ENCODE measurements at regions of chr9 and their contacts with region 1.

Region 1: GRCh38 chr9:71768388-71769174 is at the start of gene CEMIP2:
- DNase-seq: no peak
- ATAC-seq: peak; percentile 93
- H3K4me3 ChIP-seq: peak within 1 kb of the TSS; percentile 84
- H3K27ac ChIP-seq: peak within 1 kb of the TSS; percentile 37; the same call in 1 of the 2 replicates
- H3K4me1 ChIP-seq: peaks cover 14% of the 10 kb centered on the region
- H3K27me3 ChIP-seq: peaks cover 0 to 18% of the 10 kb centered on the region in 2 experiments; a peak in 2 of 4 replicates
- CTCF ChIP-seq: peak; percentile 44 to 81 (median 59); a peak in 5 of 6 replicates
- EP300 ChIP-seq: no peak
- POLR2A ChIP-seq: peak; percentile 74
- RAD21 ChIP-seq: peak; percentile 76
- polyA plus RNA-seq, gene CEMIP2: 0.50 to 0.79 TPM

Region 2: GRCh38 chr9:71285191-71285656 is 483.4 kb before region 1 on chr9:
- CTCF ChIA-PET with region 1: interaction called, 26 read pairs
- POLR2A ChIA-PET with region 1: interaction called, 3 read pairs
- RAD21 ChIA-PET with region 1: interaction called, 3 read pairs
- SMC1A ChIA-PET with region 1: interaction called, 4 read pairs
- in situ Hi-C with region 1: loop called (anchors 10 kb)
- intact Hi-C with region 1: loop called (anchors 2 kb)
- DNase-seq: no peak
- ATAC-seq: peak; percentile 94
- H3K4me3 ChIP-seq: no peak overlapping the region
- H3K27ac ChIP-seq: no peak overlapping the region
- H3K4me1 ChIP-seq: no peaks in the 10 kb centered on the region
- H3K27me3 ChIP-seq: no peaks in the 10 kb centered on the region
- CTCF ChIP-seq: peak; percentile 84 to 93 (median 90)
- EP300 ChIP-seq: no peak
- POLR2A ChIP-seq: no peak
- RAD21 ChIP-seq: peak; percentile 97

Region 3: DNA sequence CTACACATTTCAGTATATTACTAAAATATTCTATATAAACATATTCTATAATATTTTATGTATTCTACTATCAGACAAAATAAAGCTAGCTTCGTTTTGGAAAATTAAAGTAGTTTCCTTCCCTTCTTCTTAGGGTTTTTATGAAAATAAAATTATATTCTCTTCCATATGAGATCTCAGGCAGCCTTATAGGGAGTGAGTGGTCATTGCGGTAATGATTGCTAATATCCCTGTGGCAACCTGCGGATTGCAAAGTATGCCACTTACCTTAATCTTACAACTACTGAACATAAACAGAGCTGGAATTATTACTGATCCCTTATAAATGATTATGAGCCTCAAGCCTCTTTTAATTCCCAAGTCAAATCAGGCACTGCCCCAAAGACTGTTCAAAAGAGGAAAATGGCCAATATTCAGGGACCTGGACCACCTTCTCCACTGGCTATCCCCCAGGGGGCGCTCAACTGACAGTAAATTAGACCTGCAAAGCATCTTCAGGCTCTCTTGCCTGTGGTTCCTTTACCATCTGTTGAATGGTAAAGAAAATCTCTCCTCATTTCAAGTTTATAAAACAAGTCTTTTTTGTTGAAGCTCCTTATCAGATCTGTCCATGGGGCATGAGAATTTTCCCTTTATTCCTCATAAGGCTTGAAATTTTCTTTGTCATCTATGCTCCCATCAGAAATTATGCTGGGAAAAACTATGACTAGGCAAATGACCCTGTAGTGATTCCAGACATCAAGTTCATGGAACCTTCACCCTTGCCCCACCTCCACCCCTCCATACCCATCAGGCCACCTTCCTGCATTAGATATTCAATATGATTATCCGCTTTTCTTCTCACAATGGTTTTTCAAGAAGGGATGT is 164.2 kb before region 1 on chr9:
- CTCF ChIA-PET with region 1: interaction called, 31 read pairs
- POLR2A ChIA-PET with region 1: no interaction called
- RAD21 ChIA-PET with region 1: interaction called, 3 read pairs
- SMC1A ChIA-PET with region 1: interaction called, 13 read pairs
- in situ Hi-C with region 1: loop called (anchors 5 kb)
- intact Hi-C with region 1: loop called (anchors 1 kb)
- DNase-seq: no peak
- ATAC-seq: peak; percentile 93
- H3K4me3 ChIP-seq: no peak overlapping the region
- H3K27ac ChIP-seq: no peak overlapping the region
- H3K4me1 ChIP-seq: no peaks in the 10 kb centered on the region
- H3K27me3 ChIP-seq: no peaks in the 10 kb centered on the region
- CTCF ChIP-seq: peak; percentile 60 to 74 (median 62)
- EP300 ChIP-seq: no peak
- POLR2A ChIP-seq: no peak
- RAD21 ChIP-seq: peak; percentile 75

Region 4: GRCh38 chr9:71683598-71684235 is 84.9 kb before region 1 on chr9:
- CTCF ChIA-PET with region 1: interaction called, 5 read pairs
- POLR2A ChIA-PET with region 1: interaction called, 6 read pairs
- RAD21 ChIA-PET with region 1: interaction called, 7 read pairs
- SMC1A ChIA-PET with region 1: interaction called, 3 read pairs
- in situ Hi-C with region 1: no loop called
- intact Hi-C with region 1: loop called (anchors 5 kb)
- DNase-seq: no peak
- ATAC-seq: no peak
- H3K4me3 ChIP-seq: no peak overlapping the region
- H3K27ac ChIP-seq: no peak overlapping the region
- H3K4me1 ChIP-seq: no peaks in the 10 kb centered on the region
- H3K27me3 ChIP-seq: no peaks in the 10 kb centered on the region
- CTCF ChIP-seq: no peak
- EP300 ChIP-seq: no peak
- POLR2A ChIP-seq: no peak
- RAD21 ChIP-seq: no peak

Region 5: GRCh38 chr9:71783120-71783530 is 14.5 kb after region 1 on chr9:
- CTCF ChIA-PET with region 1: interaction called, 16 read pairs
- POLR2A ChIA-PET with region 1: no interaction called
- RAD21 ChIA-PET with region 1: interaction called, 8 read pairs
- SMC1A ChIA-PET with region 1: interaction called, 6 read pairs
- in situ Hi-C with region 1: no loop called
- intact Hi-C with region 1: no loop called
- DNase-seq: no peak
- ATAC-seq: peak; percentile 89
- H3K4me3 ChIP-seq: no peak overlapping the region; the same call in 1 of the 2 replicates
- H3K27ac ChIP-seq: no peak overlapping the region
- H3K4me1 ChIP-seq: peaks cover 23% of the 10 kb centered on the region
- H3K27me3 ChIP-seq: no peaks in the 10 kb centered on the region
- CTCF ChIP-seq: peak in 2 of 3 experiments; percentile 35 to 37; a peak in 3 of 6 replicates
- EP300 ChIP-seq: peak; percentile 79 to 95; a peak in 3 of 4 replicates
- POLR2A ChIP-seq: 0 out of 2 replicates have a peak, but pooled peaks have one; percentile 24
- RAD21 ChIP-seq: peak; percentile 49

Measured in GM12878 (cell line).